ENCODE measurements at regions of chr20 and their contacts with region 1.

Region 1: DNA sequence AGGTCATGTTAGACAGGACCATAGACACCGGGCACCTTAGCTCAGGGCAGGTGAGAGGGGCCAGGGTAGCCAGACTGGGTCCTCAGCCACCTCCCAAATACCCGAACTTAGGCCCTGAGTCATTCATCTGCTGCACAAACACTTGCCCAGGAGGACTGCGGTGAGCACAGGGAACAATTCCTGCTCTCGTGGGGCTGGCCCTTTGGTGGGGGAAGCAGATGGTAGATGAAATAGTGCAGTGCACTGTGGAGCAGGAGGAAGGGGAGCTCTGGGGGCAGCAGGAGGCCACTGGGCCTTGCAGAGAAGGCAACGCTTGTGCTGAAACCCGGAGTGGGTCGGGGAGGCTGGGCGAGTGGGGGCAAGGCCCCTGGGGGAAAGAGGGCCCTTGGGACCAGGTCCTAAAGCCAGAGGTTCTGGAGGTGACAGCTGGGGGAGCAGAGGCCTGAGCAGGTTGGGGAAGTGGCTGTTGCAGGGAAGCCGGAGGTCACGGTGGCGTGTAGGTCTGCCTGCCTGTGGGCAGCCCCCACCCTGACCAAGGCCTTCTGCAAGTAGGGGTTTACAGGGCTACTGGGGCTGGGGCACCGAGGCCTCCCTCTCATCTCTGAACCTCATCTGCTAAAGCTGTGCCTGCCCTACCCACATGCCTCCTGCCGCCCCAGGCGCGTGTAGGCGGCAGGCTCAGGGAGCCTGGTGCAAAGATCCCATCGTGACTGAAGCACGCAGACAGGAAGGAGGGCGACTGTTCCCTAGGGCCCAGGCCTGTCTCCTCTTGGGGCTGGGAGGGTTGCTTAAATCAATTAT is 4.7 kb upstream of the NPBWR2 start:
- DNase-seq: no peak
- H3K4me3 ChIP-seq: no peak overlapping the region
- H3K27ac ChIP-seq: no peak overlapping the region
- H3K4me1 ChIP-seq: no peaks in the 10 kb centered on the region
- H3K27me3 ChIP-seq: peaks cover 2% of the 10 kb centered on the region
- CTCF ChIP-seq: no peak

Region 2: GRCh38 chr20:64053841-64054661 is 58.0 kb before region 1 on chr20:
- CTCF ChIA-PET with region 1: no interaction called
- dilution Hi-C with region 1: loop called (anchors 5 kb)
- in situ Hi-C with region 1: no loop called
- intact Hi-C with region 1: no loop called
- DNase-seq: no peak
- H3K4me3 ChIP-seq: no peak overlapping the region
- H3K27ac ChIP-seq: no peak overlapping the region
- H3K4me1 ChIP-seq: peaks cover 14% of the 10 kb centered on the region
- H3K27me3 ChIP-seq: no peaks in the 10 kb centered on the region
- CTCF ChIP-seq: peak in 1 of 2 donors; percentile 17

Region 3: DNA sequence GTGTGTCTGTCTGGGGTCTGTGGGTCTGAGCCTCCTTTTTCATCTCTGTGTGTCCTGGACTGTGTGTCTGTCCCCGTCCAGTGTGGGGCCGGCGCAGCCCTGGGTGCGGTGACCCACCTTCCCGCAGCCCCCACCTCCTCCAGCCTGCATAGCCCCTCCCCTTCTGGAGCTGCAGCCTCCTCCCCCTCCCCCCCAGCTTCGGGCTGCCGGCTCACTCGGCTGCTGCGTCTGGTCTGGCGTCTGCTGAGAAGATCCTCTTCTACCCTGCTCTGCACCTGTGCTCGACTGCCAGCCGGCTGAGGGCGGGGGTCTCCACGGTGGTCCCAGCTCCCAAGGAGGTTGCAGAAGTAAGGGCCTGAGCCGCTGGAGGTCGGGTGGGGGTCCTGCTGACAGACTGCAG is 20.3 kb before region 1 on chr20:
- CTCF ChIA-PET with region 1: no interaction called
- dilution Hi-C with region 1: no loop called
- in situ Hi-C with region 1: no loop called
- intact Hi-C with region 1: no loop called
- DNase-seq: no peak
- H3K4me3 ChIP-seq: no peak overlapping the region
- H3K27ac ChIP-seq: no peak overlapping the region
- H3K4me1 ChIP-seq: no peaks in the 10 kb centered on the region
- H3K27me3 ChIP-seq: no peaks in the 10 kb centered on the region
- CTCF ChIP-seq: no peak

Region 4: GRCh38 chr20:64145458-64145857 is 33.4 kb after region 1 on chr20:
- CTCF ChIA-PET with region 1: no interaction called
- dilution Hi-C with region 1: loop called (anchors 5 kb)
- in situ Hi-C with region 1: no loop called
- intact Hi-C with region 1: no loop called
- DNase-seq: no peak
- H3K4me3 ChIP-seq: no peak overlapping the region
- H3K27ac ChIP-seq: no peak overlapping the region
- H3K4me1 ChIP-seq: no peaks in the 10 kb centered on the region
- H3K27me3 ChIP-seq: no peaks in the 10 kb centered on the region
- CTCF ChIP-seq: peak in 1 of 2 donors; percentile 9